ENCODE measurements at regions of chr9 and their contacts with region 1.

Region 1: DNA sequence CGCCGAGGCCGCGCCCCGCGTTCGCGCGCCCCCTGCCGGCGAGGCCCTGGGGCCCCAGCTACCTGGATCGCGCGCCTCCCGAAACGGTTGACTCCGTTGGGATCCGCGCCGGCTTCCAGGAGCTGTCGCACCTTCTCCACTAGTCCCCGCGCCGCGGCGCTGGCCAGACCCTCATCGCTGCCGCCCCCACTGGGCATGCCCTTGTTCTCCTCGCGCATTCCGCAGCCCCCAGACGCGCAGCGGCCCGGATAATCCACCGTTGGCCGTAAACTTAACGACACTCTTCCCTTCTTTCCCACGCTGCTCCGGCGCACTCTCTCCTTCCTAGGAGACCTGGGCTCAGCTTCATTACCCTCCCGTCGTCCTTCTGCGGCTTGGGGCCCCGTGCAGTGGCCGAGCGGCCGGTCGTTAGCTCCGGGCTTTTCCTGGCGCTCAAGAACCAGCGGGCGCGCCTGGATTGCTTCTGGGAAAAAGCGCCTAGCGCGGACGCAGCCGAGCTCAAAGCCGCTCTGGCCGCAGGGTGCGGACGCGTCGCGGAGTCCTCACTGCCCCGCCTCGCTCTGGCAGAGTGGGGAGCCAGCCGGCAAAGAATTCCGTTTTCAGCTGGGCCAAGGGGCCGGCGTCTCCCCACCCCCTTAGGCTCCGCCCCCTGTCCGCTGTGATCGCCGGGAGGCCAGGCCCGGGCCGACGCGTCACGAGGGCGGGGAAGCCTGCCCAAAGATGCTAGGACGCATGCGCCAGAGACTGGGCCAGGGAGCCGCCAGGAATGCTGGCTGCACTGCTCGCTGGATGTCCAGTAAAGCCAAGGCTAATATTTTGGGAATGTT is at the start of gene CDKN2B:
- DNase-seq: peak; percentile 87
- H3K4me3 ChIP-seq: peak within 1 kb of the TSS; percentile 94
- H3K27me3 ChIP-seq: no peaks in the 10 kb centered on the region
- CTCF ChIP-seq: peak; percentile 65
- polyA plus RNA-seq, gene CDKN2B: 4.3 and 5.2 TPM in 2 replicates

Region 2: DNA sequence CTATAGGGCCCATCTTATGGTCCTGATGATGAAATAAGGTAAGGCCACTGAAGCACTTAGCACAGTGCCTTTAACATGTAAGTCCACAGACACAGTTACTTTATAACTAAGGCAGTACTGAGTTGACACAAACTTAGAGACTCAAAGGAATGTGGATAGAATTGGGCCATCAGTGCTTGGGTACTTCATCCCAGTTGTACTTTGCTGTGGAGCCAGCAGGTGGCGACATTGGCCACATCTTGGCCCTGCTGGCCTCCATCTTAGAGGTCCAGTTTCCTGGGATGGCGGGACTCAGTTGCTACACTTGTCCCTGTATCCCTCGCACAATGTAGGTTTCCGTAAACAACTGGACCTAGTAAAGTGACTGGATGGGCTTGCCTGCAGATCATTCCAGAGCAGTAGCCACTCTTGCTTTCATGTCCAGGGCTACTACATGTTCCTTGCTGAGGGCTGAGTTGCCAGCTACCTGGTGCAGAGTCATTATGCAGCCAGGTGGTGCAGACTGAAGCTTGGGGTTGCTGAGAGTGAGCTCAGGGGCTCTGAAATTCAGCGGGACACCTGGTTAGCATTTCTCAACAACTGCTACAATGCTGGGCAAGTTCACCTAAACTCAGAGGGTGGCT is 195.9 kb before region 1 on chr9:
- CTCF ChIA-PET with region 1: interaction called, 95 read pairs
- POLR2A ChIA-PET with region 1: no interaction called
- DNase-seq: no peak
- H3K4me3 ChIP-seq: no peak overlapping the region
- H3K27me3 ChIP-seq: no peaks in the 10 kb centered on the region
- CTCF ChIP-seq: peak; percentile 84

Region 3: GRCh38 chr9:21958833-21959232 is 50.1 kb before region 1 on chr9:
- CTCF ChIA-PET with region 1: no interaction called
- POLR2A ChIA-PET with region 1: no interaction called
- DNase-seq: no peak
- H3K4me3 ChIP-seq: no peak overlapping the region
- H3K27me3 ChIP-seq: no peaks in the 10 kb centered on the region; the same call in none of the 2 replicates
- CTCF ChIP-seq: no peak

Region 4: DNA sequence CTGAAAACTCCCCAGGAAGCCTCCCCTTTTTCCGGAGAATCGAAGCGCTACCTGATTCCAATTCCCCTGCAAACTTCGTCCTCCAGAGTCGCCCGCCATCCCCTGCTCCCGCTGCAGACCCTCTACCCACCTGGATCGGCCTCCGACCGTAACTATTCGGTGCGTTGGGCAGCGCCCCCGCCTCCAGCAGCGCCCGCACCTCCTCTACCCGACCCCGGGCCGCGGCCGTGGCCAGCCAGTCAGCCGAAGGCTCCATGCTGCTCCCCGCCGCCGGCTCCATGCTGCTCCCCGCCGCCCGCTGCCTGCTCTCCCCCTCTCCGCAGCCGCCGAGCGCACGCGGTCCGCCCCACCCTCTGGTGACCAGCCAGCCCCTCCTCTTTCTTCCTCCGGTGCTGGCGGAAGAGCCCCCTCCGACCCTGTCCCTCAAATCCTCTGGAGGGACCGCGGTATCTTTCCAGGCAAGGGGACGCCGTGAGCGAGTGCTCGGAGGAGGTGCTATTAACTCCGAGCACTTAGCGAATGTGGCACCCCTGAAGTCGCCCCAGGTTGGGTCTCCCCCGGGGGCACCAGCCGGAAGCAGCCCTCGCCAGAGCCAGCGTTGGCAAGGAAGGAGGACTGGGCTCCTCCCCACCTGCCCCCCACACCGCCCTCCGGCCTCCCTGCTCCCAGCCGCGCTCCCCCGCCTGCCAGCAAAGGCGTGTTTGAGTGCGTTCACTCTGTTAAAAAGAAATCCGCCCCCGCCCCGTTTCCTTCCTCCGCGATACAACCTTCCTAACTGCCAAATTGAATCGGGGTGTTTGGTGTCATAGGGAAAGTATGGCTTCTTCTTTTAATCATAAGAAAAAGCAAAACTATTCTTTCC is 34.2 kb before region 1 on chr9:
- CTCF ChIA-PET with region 1: interaction called, 25 read pairs
- POLR2A ChIA-PET with region 1: no interaction called
- DNase-seq: no peak
- H3K4me3 ChIP-seq: peak overlapping the region; percentile 53
- H3K27me3 ChIP-seq: peaks cover 34% of the 10 kb centered on the region
- CTCF ChIP-seq: no peak

Region 5: GRCh38 chr9:22026696-22027095 is 17.7 kb after region 1 on chr9:
- CTCF ChIA-PET with region 1: interaction called, 38 read pairs
- POLR2A ChIA-PET with region 1: interaction called, 3 read pairs
- DNase-seq: no peak
- H3K4me3 ChIP-seq: no peak overlapping the region
- H3K27me3 ChIP-seq: no peaks in the 10 kb centered on the region
- CTCF ChIP-seq: no peak

Region 6: GRCh38 chr9:22119537-22120158 is 110.7 kb after region 1 on chr9:
- CTCF ChIA-PET with region 1: interaction called, 60 read pairs
- POLR2A ChIA-PET with region 1: interaction called, 3 read pairs
- DNase-seq: no peak
- H3K4me3 ChIP-seq: no peak overlapping the region
- H3K27me3 ChIP-seq: no peaks in the 10 kb centered on the region
- CTCF ChIP-seq: peak; percentile 69

Region 7: GRCh38 chr9:22244141-22245011 is 235.4 kb after region 1 on chr9:
- CTCF ChIA-PET with region 1: interaction called, 28 read pairs
- POLR2A ChIA-PET with region 1: no interaction called
- DNase-seq: no peak
- H3K4me3 ChIP-seq: no peak overlapping the region
- H3K27me3 ChIP-seq: no peaks in the 10 kb centered on the region; the same call in 1 of the 2 replicates
- CTCF ChIP-seq: peak; percentile 67

Region 8: GRCh38 chr9:22590336-22591033 is 581.5 kb after region 1 on chr9:
- CTCF ChIA-PET with region 1: no interaction called
- POLR2A ChIA-PET with region 1: no interaction called
- DNase-seq: no peak
- H3K4me3 ChIP-seq: no peak overlapping the region
- H3K27me3 ChIP-seq: no peaks in the 10 kb centered on the region
- CTCF ChIP-seq: no peak

Measured in BJ (cell line).